AG04449 (cell line): ENCODE measurements at regions of chr18 and their contacts with region 1.

Region 1: DNA sequence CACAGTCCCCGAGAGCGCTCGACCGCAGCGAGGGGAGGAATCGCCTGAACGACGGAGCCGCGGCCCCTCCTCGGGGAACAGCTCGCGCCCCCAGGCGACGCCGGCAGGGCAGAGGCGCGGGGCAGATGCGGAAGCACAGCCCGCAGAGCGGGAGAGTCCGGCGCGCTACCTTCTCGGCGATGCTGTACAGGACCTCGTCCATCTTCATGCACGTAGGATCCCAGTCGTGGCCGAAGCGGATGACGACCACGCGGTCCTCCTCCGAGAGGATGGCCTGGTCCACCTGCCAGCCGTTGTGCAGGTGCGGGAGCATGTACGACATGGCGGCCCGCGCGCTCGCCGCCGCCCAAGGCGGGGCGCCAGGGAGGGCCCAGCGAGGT is 302 bp downstream of the TXNL4A start:
- DNase-seq: no peak
- H3K4me3 ChIP-seq: peak overlapping the region; percentile 99
- CTCF ChIP-seq: peak; percentile 30

Region 2: GRCh38 chr18:79964330-79965118 is 23.5 kb before region 1 on chr18 and contains the start of gene HSBP1L1:
- CTCF ChIA-PET with region 1: interaction called, 17 read pairs
- POLR2A ChIA-PET with region 1: no interaction called
- DNase-seq: no peak
- H3K4me3 ChIP-seq: peak within 1 kb of the TSS; percentile 60
- CTCF ChIP-seq: peak; percentile 19

Region 3: GRCh38 chr18:79975985-79976680 is 11.9 kb before region 1 on chr18:
- CTCF ChIA-PET with region 1: interaction called, 10 read pairs
- POLR2A ChIA-PET with region 1: no interaction called
- DNase-seq: no peak
- H3K4me3 ChIP-seq: no peak overlapping the region
- CTCF ChIP-seq: no peak

Region 4: DNA sequence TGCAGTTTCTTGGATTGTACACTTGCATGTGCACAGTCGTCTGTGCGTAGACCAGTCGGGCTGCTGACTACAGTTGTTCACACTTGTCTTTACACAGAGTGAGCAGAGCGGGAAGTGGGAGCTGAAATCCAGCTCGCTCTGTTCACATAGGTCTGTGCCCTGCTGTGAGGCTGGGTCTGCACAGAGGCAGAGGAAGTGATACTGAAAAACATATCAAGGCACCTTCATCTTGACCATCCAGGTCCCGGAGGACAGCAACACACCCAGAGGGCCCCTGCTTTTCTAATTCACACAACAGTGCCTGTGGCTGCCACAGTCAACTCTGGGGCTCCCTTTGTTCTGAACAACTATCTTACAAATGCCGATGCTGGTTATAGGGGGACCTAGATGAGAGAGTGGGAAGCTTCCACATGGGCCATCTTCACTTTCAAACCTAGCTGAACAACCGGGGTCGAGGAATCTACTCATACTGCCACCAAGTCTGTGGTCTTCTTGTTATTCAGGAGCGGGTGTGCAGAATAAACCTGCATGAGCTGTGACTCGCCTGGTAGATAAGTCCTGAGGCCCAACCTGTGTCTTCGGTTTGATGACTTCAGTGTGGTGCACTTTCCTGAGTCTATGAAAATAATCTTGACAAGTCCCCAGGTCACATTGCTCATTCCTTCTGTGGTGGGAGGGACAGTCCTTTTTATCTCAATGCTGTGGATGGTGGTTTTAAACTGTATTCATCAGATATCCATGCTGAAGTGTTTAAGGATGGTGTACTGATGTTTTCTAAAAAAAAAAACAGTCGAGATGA is 117.5 kb after region 1 on chr18:
- CTCF ChIA-PET with region 1: no interaction called
- POLR2A ChIA-PET with region 1: no interaction called
- DNase-seq: no peak
- H3K4me3 ChIP-seq: no peak overlapping the region
- CTCF ChIP-seq: no peak